ENCODE measurements at regions of chr1 and their contacts with region 1.

Region 1: DNA sequence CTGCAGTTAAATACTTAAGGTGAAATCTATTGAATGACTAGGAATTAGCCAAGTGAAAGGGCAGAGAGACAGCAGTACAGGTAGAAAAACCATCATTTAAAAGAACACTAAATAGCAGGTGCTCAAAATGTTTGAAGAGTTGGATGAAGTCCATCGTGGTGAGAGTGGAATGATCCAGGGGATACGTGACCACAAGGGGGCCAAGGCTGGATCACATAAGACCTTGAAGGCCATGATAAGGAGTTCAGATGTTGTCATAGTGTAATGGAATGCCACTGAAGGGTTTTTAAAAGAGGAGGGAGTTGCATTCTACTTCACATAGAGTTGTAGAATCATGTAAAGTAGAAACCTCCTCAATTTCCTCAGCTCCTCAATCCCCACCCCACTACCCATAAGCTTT is 34.8 kb upstream of the HOOK1 start:
- DNase-seq: no peak
- ATAC-seq: no peak
- H3K4me3 ChIP-seq: no peak overlapping the region
- H3K4me3 Mint-ChIP-seq: no peak overlapping the region
- H3K27ac ChIP-seq: no peak overlapping the region
- H3K27ac Mint-ChIP-seq: no peak overlapping the region
- H3K4me1 ChIP-seq: no peaks in the 10 kb centered on the region
- H3K4me1 Mint-ChIP-seq: no peaks in the 10 kb centered on the region
- H3K27me3 ChIP-seq: no peaks in the 10 kb centered on the region
- H3K27me3 Mint-ChIP-seq: peaks cover 0 to 20% (median 0%) of the 10 kb centered on the region in 5 donors

Region 2: GRCh38 chr1:59845091-59845490 is 65.1 kb after region 1 on chr1:
- CTCF ChIA-PET with region 1: no interaction called
- POLR2A ChIA-PET with region 1: no interaction called
- intact Hi-C with region 1: loop called in 1 of 2 experiments (anchors 10 kb)
- DNase-seq: no peak
- ATAC-seq: no peak
- H3K4me3 ChIP-seq: no peak overlapping the region
- H3K4me3 Mint-ChIP-seq: no peak overlapping the region
- H3K27ac ChIP-seq: no peak overlapping the region
- H3K27ac Mint-ChIP-seq: peak overlapping the region in 1 of 9 donors; percentile 58
- H3K4me1 ChIP-seq: no peaks in the 10 kb centered on the region
- H3K4me1 Mint-ChIP-seq: peaks cover 0 to 7% (median 4%) of the 10 kb centered on the region in 7 donors
- H3K27me3 ChIP-seq: no peaks in the 10 kb centered on the region
- H3K27me3 Mint-ChIP-seq: no peaks in the 10 kb centered on the region